Activated CD4-positive, alpha-beta memory T cell treated with anti-CD3 and anti-CD28 coated beads, Interleukin-2, amount 10 ng/mL, durations not matched to agents 7 days and 5 days (primary cell): ENCODE measurements at regions of chr6 and their contacts with region 1.

Region 1: DNA sequence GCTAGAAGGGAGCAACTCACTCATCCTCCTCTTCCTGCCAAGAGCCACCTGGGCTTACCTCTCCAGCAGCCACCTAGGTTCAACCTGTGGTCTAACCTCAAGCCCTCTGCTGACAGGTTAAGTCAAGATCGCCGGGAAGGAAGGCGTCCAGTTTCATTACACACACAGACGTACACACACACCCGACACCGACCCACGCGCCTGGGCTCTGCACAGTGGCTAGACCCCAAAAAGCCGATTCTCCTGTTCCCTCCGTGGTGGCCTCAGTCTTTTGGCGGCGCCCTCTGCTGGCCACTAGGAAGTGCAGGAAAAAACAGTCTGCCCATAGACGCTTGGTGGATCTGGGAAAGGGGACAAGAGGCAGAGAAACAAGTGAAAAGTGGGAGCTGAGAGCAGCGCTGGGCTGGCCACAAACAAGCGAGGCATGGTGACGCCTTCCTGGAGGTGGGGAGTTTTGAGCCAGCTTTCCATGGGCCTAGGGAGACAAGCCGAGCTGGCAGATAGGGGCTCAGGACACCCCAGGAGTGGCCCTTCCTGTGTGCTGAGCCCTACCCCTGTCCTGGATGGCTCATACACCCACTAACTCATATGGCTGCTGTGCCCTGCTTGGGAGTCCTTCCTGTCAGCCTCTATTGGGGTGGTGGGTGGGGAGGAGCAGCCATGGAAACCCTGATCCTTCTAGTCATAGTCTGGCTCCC is 52.7 kb downstream of the MRPL14 start:
- DNase-seq: peak; percentile 73
- H3K4me3 Mint-ChIP-seq: peak overlapping the region; percentile 87
- H3K27ac Mint-ChIP-seq: peak overlapping the region; percentile 71
- H3K4me1 Mint-ChIP-seq: peaks cover 21% of the 10 kb centered on the region
- H3K27me3 Mint-ChIP-seq: peaks cover 33% of the 10 kb centered on the region

Region 2: GRCh38 chr6:43667245-43668150 is 407.1 kb before region 1 on chr6:
- CTCF ChIA-PET with region 1: interaction called, 15 read pairs
- POLR2A ChIA-PET with region 1: interaction called, 3 read pairs
- DNase-seq: peak; percentile 82
- H3K4me3 Mint-ChIP-seq: no peak overlapping the region
- H3K27ac Mint-ChIP-seq: no peak overlapping the region
- H3K4me1 Mint-ChIP-seq: peaks cover 46% of the 10 kb centered on the region
- H3K27me3 Mint-ChIP-seq: peaks cover 7% of the 10 kb centered on the region

Region 3: DNA sequence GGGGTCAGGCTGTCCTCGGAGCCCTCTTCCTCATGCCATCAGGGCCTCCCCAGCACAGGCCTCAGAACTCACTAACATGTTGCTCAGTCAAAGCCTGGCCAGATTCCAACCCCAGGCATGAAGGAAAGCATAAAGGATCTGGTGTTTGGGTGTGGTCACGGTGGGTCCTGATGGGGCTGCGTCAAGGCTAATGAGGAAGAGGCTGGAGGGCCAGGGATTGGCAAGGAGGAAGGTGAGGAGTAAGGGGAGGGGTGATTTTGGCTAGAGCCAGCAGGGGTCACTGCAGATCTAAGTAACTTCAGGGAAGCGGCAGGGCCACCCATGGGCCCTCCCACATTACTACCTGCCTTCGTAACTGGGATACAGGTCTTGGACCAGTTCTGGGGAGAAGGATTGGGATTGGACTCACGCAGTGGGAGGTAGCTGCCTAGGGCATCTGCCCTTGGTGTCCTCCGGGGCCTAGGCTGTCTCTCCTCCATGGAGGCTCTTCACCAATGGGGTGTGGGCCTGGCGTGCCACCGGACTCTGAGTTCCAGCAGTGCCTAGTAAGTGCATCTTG is 350.8 kb before region 1 on chr6:
- CTCF ChIA-PET with region 1: interaction called, 18 read pairs
- POLR2A ChIA-PET with region 1: interaction called, 9 read pairs
- DNase-seq: peak; percentile 78
- H3K4me3 Mint-ChIP-seq: no peak overlapping the region
- H3K27ac Mint-ChIP-seq: no peak overlapping the region
- H3K4me1 Mint-ChIP-seq: peaks cover 27% of the 10 kb centered on the region
- H3K27me3 Mint-ChIP-seq: peaks cover 2% of the 10 kb centered on the region

Region 4: DNA sequence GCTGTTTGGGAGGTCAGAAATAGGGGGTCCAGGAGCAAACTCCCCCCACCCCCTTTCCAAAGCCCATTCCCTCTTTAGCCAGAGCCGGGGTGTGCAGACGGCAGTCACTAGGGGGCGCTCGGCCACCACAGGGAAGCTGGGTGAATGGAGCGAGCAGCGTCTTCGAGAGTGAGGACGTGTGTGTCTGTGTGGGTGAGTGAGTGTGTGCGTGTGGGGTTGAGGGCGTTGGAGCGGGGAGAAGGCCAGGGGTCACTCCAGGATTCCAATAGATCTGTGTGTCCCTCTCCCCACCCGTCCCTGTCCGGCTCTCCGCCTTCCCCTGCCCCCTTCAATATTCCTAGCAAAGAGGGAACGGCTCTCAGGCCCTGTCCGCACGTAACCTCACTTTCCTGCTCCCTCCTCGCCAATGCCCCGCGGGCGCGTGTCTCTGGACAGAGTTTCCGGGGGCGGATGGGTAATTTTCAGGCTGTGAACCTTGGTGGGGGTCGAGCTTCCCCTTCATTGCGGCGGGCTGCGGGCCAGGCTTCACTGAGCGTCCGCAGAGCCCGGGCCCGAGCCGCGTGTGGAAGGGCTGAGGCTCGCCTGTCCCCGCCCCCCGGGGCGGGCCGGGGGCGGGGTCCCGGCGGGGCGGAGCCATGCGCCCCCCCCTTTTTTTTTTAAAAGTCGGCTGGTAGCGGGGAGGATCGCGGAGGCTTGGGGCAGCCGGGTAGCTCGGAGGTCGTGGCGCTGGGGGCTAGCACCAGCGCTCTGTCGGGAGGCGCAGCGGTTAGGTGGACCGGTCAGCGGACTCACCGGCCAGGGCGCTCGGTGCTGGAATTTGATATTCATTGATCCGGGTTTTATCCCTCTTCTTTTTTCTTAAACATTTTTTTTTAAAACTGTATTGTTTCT is 304.8 kb before region 1 on chr6 and contains the start of gene VEGFA:
- CTCF ChIA-PET with region 1: interaction called, 69 read pairs
- POLR2A ChIA-PET with region 1: interaction called, 36 read pairs
- DNase-seq: peak; percentile 88
- H3K4me3 Mint-ChIP-seq: peak within 1 kb of the TSS; percentile 90
- H3K27ac Mint-ChIP-seq: peak within 1 kb of the TSS; percentile 75
- H3K4me1 Mint-ChIP-seq: peaks cover 34% of the 10 kb centered on the region
- H3K27me3 Mint-ChIP-seq: peaks cover 3% of the 10 kb centered on the region
- total RNA-seq, gene VEGFA: 48.1 to 49.5 TPM

Region 5: GRCh38 chr6:43774776-43775534 is 299.6 kb before region 1 on chr6:
- CTCF ChIA-PET with region 1: interaction called, 69 read pairs
- POLR2A ChIA-PET with region 1: interaction called, 36 read pairs
- DNase-seq: peak; percentile 73
- H3K4me3 Mint-ChIP-seq: no peak overlapping the region
- H3K27ac Mint-ChIP-seq: no peak overlapping the region
- H3K4me1 Mint-ChIP-seq: peaks cover 49% of the 10 kb centered on the region
- H3K27me3 Mint-ChIP-seq: no peaks in the 10 kb centered on the region

Region 6: GRCh38 chr6:44064089-44064947 is 10.3 kb before region 1 on chr6:
- CTCF ChIA-PET with region 1: interaction called, 24 read pairs
- POLR2A ChIA-PET with region 1: interaction called, 5 read pairs
- DNase-seq: peak; percentile 29
- H3K4me3 Mint-ChIP-seq: no peak overlapping the region
- H3K27ac Mint-ChIP-seq: no peak overlapping the region
- H3K4me1 Mint-ChIP-seq: peaks cover 7% of the 10 kb centered on the region
- H3K27me3 Mint-ChIP-seq: peaks cover 4% of the 10 kb centered on the region